Activated B cell treated with CpG ODN at 0.5 μM for 24 hours (primary cell): ENCODE measurements at regions of chr14 and their contacts with region 1.

Region 1: GRCh38 chr14:56339855-56340701 is 221.9 kb downstream of the PELI2 start:
- DNase-seq: peak; percentile 20
- ATAC-seq: peak; percentile 56
- H3K4me3 Mint-ChIP-seq: peak overlapping the region; percentile 29
- H3K27ac Mint-ChIP-seq: no peak overlapping the region
- H3K4me1 Mint-ChIP-seq: peaks cover 11% of the 10 kb centered on the region
- H3K27me3 Mint-ChIP-seq: no peaks in the 10 kb centered on the region
- CTCF ChIP-seq: peak; percentile 21

Region 2: GRCh38 chr14:55438066-55438683 is 901.9 kb before region 1 on chr14:
- CTCF ChIA-PET with region 1: interaction called, 3 read pairs
- POLR2A ChIA-PET with region 1: no interaction called
- intact Hi-C with region 1: loop called (anchors 2 kb)
- DNase-seq: no peak
- ATAC-seq: no peak
- H3K4me3 Mint-ChIP-seq: no peak overlapping the region
- H3K27ac Mint-ChIP-seq: no peak overlapping the region
- H3K4me1 Mint-ChIP-seq: peaks cover 7% of the 10 kb centered on the region
- H3K27me3 Mint-ChIP-seq: peaks cover 6% of the 10 kb centered on the region
- CTCF ChIP-seq: no peak

Region 3: GRCh38 chr14:55707365-55707804 is 632.7 kb before region 1 on chr14:
- CTCF ChIA-PET with region 1: interaction called, 6 read pairs
- POLR2A ChIA-PET with region 1: no interaction called
- intact Hi-C with region 1: loop called (anchors 1 kb)
- DNase-seq: no peak
- ATAC-seq: no peak
- H3K4me3 Mint-ChIP-seq: no peak overlapping the region
- H3K27ac Mint-ChIP-seq: no peak overlapping the region
- H3K4me1 Mint-ChIP-seq: peaks cover 3% of the 10 kb centered on the region
- H3K27me3 Mint-ChIP-seq: no peaks in the 10 kb centered on the region
- CTCF ChIP-seq: no peak

Region 4: GRCh38 chr14:55843718-55844403 is 496.2 kb before region 1 on chr14:
- CTCF ChIA-PET with region 1: no interaction called
- POLR2A ChIA-PET with region 1: no interaction called
- intact Hi-C with region 1: loop called (anchors 1 kb)
- DNase-seq: no peak
- ATAC-seq: no peak
- H3K4me3 Mint-ChIP-seq: no peak overlapping the region
- H3K27ac Mint-ChIP-seq: no peak overlapping the region
- H3K4me1 Mint-ChIP-seq: no peaks in the 10 kb centered on the region
- H3K27me3 Mint-ChIP-seq: no peaks in the 10 kb centered on the region
- CTCF ChIP-seq: no peak